Breast epithelium (tissue), 4 donors: ENCODE measurements at regions of chr2 and their contacts with region 1.

Region 1: GRCh38 chr2:120651816-120652215 is 83.9 kb upstream of the GLI2 start:
- DNase-seq: no peak
- H3K4me3 ChIP-seq: no peak overlapping the region
- H3K27ac ChIP-seq: no peak overlapping the region
- H3K4me1 ChIP-seq: no peaks in the 10 kb centered on the region
- H3K27me3 ChIP-seq: peaks cover 0 to 2% of the 10 kb centered on the region in 2 donors
- CTCF ChIP-seq: no peak
- POLR2A ChIP-seq: no peak

Region 2: DNA sequence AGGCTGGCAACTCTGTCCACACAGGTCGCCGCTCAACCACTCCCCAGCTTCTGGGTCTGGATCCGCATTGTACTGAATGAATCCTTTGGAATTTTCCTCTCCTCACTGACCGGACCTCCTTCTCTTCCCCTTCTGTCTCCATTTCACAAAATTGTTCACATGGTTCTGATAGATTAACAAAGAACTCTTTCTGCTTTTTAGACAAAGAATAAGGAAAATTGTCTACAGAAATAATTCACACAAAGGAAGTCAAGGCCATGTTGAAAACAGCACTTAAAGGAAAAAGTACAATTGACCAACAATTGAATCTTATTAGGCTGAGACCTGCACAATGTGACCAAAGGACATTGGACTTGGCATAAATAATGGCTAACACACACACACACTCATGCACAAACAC is 10.2 kb after region 1 on chr2:
- intact Hi-C with region 1: loop called (anchors 1 kb)
- DNase-seq: no peak
- H3K4me3 ChIP-seq: no peak overlapping the region
- H3K27ac ChIP-seq: peak overlapping the region; percentile 19 to 54
- H3K4me1 ChIP-seq: peaks cover 0 to 5% of the 10 kb centered on the region in 2 donors
- H3K27me3 ChIP-seq: no peaks in the 10 kb centered on the region
- CTCF ChIP-seq: no peak
- POLR2A ChIP-seq: no peak